ENCODE measurements at regions of chrX and their contacts with region 1.

Region 1: GRCh38 chrX:151680805-151681204 is 14.5 kb upstream of the PRRG3 start:
- DNase-seq: peak; percentile 49 to 80 (median 60)
- ATAC-seq: peak; percentile 50
- H3K4me3 ChIP-seq: no peak overlapping the region
- H3K27ac ChIP-seq: no peak overlapping the region
- H3K4me1 ChIP-seq: no peaks in the 10 kb centered on the region
- H3K27me3 ChIP-seq: no peaks in the 10 kb centered on the region
- CTCF ChIP-seq: peak; percentile 31 to 75 (median 59)
- POLR2A ChIP-seq: no peak

Region 2: DNA sequence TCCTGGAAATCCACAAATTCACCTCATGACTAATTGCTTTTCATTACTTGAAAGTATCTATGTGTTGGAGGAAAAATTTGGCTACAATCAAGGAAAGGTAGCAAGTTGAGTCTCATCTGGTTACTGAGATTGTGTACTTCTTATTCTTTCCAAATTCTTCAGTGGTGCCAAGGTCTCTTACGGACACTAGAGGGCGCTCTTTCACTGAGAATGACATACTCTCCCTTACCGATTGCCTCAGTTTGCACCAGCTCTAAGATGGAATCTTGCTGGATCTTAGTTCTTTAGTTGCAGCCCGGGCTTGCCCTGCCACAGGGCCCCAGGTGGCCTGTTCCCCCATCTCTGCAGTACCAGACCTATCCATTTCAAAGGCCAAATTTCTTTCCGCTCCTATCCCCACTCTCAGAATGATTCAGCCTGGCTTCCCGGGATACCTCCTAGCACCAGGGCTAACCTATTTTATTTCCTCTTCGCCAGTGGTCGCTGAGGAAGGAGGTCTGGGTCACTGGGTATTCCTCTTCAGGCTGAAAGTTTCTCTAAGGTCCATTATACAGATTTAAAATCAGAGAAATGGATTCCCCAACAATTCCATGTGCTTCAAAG is 529.0 kb before region 1 on chrX:
- intact Hi-C with region 1: loop called (anchors 10 kb)
- DNase-seq: peak; percentile 20 to 40 (median 36)
- ATAC-seq: no peak
- H3K4me3 ChIP-seq: no peak overlapping the region
- H3K27ac ChIP-seq: no peak overlapping the region
- H3K4me1 ChIP-seq: no peaks in the 10 kb centered on the region
- H3K27me3 ChIP-seq: no peaks in the 10 kb centered on the region
- CTCF ChIP-seq: peak; percentile 50 to 80 (median 63)
- POLR2A ChIP-seq: no peak

Measured in body of pancreas (tissue), 4 donors.